Gastrocnemius medialis (tissue), 4 donors: ENCODE measurements at regions of chr16 and their contacts with region 1.

Region 1: GRCh38 chr16:18789850-18790724 is at the start of gene RPS15A:
- DNase-seq: peak; percentile 94 to 96
- ATAC-seq: peak; percentile 96 to 98
- H3K4me3 ChIP-seq: peak within 1 kb of the TSS; percentile 83 to 98 (median 86)
- H3K27ac ChIP-seq: peak within 1 kb of the TSS; percentile 87 to 96 (median 90)
- H3K4me1 ChIP-seq: peaks cover 40 to 48% of the 10 kb centered on the region in 2 donors
- H3K27me3 ChIP-seq: no peaks in the 10 kb centered on the region
- CTCF ChIP-seq: no peak
- POLR2A ChIP-seq: peak; percentile 86 to 89
- total RNA-seq, gene RPS15A: 1,340 to 2,259 (median 1,706) TPM

Region 2: DNA sequence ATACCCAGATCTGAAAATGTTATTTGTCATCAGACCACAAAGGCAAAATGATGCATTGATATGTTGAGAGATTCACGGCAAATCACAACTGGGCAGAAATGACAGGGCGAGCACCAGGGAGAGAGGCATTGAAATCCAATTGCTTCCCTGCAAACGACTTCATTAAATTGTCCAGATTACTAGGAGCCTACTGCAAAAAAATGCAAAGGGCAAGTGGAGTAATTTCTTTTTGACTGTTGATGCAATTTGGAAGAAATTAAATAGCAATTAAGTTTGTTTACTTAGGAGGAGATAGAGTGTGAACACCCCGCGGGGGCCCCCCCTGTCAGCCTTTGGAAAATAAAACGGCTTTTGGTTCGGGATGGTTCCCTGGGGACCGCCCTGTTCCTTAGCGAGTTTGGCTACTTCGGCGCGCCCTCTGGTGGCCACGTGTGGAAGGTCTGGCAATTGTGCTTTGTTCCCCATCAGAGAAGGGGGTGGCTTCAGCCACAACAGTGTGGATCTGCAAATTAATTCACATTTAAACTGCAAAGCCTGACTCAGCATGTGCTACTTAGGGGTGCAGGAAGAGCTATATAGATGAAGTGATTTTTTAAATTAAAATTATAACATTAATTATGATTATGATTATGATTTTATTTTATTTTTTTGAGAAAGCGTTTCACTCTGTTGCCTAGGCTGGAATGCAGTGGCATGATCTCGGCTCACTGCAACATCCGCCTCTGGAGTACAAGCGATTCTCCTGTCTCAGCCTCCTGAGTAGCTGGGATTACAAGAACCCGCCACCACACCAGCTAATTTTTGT is 179.2 kb after region 1 on chr16:
- in situ Hi-C with region 1: loop called in 1 of 4 experiments (anchors 10 kb)
- intact Hi-C with region 1: loop called (anchors 5 kb)
- DNase-seq: peak; percentile 65 to 79
- ATAC-seq: peak; percentile 80 to 95
- H3K4me3 ChIP-seq: peak overlapping the region; percentile 38 to 44 (median 42)
- H3K27ac ChIP-seq: peak overlapping the region in 1 of 4 donors; percentile 9
- H3K4me1 ChIP-seq: peaks cover 0 to 4% of the 10 kb centered on the region in 2 donors
- H3K27me3 ChIP-seq: no peaks in the 10 kb centered on the region
- CTCF ChIP-seq: peak; percentile 76 to 94 (median 92)
- POLR2A ChIP-seq: no peak